Gastrocnemius medialis (tissue), 4 donors: ENCODE measurements at regions of chr10 and their contacts with region 1.

Region 1: DNA sequence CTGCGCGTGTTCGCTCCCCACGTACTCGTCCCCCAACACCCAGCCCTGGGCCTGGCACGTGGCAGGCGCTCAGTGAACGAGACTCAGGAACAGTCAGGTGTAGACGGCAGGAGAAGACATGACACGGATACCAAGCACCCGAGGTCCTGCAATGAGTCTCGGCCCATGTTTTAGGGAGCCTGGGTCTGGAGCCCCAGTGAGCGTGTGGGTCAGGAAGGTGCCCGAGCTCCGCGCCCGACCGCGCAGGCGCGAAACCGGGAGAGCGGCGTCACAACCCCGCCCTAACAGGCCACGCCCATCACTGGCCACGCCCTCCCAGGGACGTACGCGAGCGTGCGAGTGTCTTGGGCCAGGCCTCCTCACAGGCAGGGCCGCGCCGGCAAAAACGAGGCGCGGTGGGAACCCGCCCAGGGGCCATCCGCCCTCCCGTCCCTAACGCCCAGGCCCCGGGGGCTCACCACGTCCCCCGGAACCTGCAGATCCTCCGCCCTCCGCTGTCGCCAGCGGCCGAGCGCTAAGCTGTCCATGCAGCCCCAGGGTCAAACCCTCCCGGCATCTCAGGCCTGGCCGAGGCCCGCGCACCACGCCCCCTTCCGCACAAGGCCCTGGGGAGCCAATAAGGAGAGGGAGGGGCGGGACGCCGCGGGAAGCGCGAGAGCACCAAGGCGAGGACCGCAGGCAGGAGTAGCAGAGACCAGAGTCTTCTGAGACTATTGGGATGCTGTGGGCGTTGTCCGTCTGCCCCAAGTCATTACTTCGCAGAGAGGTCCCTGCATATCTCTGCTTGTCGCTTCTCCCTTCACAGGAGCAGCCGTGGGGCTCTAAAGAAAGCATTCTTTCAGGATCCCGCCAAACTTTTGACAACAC is at the start of gene C10orf143:
- DNase-seq: peak; percentile 96 to 97
- ATAC-seq: peak; percentile 89 to 90
- H3K4me3 ChIP-seq: peak within 1 kb of the TSS; percentile 80 to 96 (median 90)
- H3K27ac ChIP-seq: peak within 1 kb of the TSS; percentile 92 to 99 (median 96)
- H3K4me1 ChIP-seq: peaks cover 16 to 26% of the 10 kb centered on the region in 2 donors
- H3K27me3 ChIP-seq: no peaks in the 10 kb centered on the region
- CTCF ChIP-seq: no peak
- POLR2A ChIP-seq: peak; percentile 80 to 81
- total RNA-seq, gene C10orf143: 0.55 to 2.5 (median 1.3) TPM

Region 2: GRCh38 chr10:129466703-129467358 is 643.6 kb before region 1 on chr10 and contains the start of gene MGMT:
- in situ Hi-C with region 1: no loop called
- intact Hi-C with region 1: loop called (anchors 5 kb)
- DNase-seq: peak; percentile 84 to 92
- ATAC-seq: peak; percentile 95
- H3K4me3 ChIP-seq: peak within 1 kb of the TSS; percentile 74 to 97 (median 78)
- H3K27ac ChIP-seq: peak within 1 kb of the TSS; percentile 77 to 92 (median 84)
- H3K4me1 ChIP-seq: peaks cover 12 to 19% of the 10 kb centered on the region in 2 donors
- H3K27me3 ChIP-seq: no peaks in the 10 kb centered on the region
- CTCF ChIP-seq: peak in 1 of 5 experiments; percentile 7
- POLR2A ChIP-seq: peak; percentile 43 to 57
- total RNA-seq, gene MGMT: 8.9 to 20.7 (median 17.1) TPM

Region 3: DNA sequence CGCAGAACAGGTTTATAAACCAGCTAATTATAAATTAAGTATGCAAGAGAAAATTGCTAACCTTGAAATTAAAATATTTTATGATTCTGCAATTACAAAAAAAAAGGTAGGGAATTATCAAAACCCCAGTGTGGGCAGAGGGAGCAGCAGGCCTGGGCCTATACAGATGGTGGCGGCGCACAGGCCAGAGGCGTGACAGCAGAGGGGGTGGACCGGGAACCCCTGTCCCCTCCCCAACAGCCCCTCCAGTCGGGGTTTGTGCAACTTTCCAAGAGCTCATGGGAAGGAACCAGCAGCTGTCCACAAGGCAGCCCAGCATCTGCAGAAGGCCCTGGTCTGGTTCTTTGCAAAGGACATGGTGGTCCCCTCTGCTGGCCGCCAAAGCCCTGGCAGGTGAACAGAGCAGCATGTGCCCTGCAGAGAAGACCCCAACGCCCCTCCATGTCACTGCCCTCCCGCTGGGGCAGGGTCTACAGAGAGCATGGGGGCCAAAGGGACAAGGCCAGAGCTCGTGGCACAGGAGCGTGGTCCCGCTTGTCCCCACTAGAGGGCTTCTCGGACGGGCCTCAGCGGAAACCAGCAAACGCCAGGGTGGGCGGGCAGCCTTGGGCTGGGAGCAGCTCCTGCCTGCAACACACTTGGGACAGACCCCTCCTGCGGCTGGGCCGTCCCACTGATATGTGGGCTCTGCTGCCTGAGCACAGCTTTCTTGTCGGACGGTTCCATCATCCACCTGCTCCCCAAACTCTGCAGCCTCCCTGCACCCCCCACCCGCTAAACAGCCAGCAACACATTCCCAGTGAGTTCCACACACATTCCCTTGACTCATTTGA is 221.5 kb before region 1 on chr10:
- in situ Hi-C with region 1: no loop called
- intact Hi-C with region 1: loop called (anchors 10 kb)
- DNase-seq: peak in 1 of 2 donors; percentile 25
- ATAC-seq: peak; percentile 30 to 34
- H3K4me3 ChIP-seq: no peak overlapping the region
- H3K27ac ChIP-seq: peak overlapping the region in 3 of 4 donors; percentile 5 to 12 (median 8)
- H3K4me1 ChIP-seq: peaks cover 17 to 21% of the 10 kb centered on the region in 2 donors
- H3K27me3 ChIP-seq: no peaks in the 10 kb centered on the region
- CTCF ChIP-seq: peak; percentile 33 to 65 (median 56)
- POLR2A ChIP-seq: no peak

Region 4: GRCh38 chr10:129971381-129972144 is 138.9 kb before region 1 on chr10:
- in situ Hi-C with region 1: no loop called
- intact Hi-C with region 1: loop called (anchors 5 kb)
- DNase-seq: no peak
- ATAC-seq: peak; percentile 60 to 71
- H3K4me3 ChIP-seq: peak overlapping the region; percentile 40 to 60 (median 48)
- H3K27ac ChIP-seq: no peak overlapping the region
- H3K4me1 ChIP-seq: peaks cover 9 to 20% of the 10 kb centered on the region in 2 donors
- H3K27me3 ChIP-seq: peaks cover 59 to 64% (median 62%) of the 10 kb centered on the region in 3 donors
- CTCF ChIP-seq: peak in 4 of 5 experiments; percentile 51 to 84 (median 56)
- POLR2A ChIP-seq: no peak

Region 5: GRCh38 chr10:129993621-129994020 is 116.9 kb before region 1 on chr10:
- in situ Hi-C with region 1: no loop called
- intact Hi-C with region 1: no loop called
- DNase-seq: no peak
- ATAC-seq: peak; percentile 33 to 65
- H3K4me3 ChIP-seq: no peak overlapping the region
- H3K27ac ChIP-seq: no peak overlapping the region
- H3K4me1 ChIP-seq: no peaks in the 10 kb centered on the region
- H3K27me3 ChIP-seq: no peaks in the 10 kb centered on the region
- CTCF ChIP-seq: no peak
- POLR2A ChIP-seq: no peak

Region 6: DNA sequence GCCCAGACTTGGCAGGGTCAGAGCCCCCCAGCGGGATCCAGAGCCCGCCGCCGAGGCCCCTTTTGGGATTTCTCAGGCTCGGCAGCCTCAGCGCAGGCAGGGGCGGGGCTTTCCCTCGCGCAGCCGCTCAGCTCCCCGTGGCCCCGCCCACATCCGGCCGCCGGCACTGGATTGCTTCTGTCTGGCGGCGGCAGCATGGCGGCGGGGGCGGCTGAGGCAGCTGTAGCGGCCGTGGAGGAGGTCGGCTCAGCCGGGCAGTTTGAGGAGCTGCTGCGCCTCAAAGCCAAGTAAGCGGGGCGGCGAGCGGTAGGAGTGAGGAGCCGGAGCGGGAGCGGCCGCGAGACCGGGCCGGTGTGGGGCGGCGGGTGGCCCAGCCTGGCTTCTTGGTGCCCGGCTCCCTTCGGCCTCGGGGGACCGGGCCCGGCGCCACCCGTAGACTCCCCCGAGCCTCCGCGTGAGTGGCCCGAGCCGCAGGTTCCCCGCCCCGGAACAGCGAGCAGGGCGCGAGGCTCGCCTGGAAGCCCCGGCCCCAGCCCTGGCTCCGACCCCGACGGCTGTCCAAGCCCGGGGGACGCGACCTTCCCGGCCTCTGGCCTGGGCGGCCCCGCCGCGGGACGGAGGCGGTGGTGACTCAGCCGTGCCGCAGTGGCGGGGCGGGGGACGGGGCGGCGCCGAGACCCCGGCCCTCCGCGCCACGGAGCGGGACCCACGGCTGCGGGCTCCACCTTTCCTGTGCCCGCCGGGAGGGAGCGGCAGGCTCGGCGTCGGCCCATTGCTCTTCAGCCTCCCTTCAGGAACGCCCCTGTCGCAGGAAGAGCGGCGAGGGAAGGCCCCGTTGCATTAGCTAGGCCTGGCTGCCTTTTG is 26.0 kb after region 1 on chr10 and contains the start of gene GLRX3:
- in situ Hi-C with region 1: no loop called
- intact Hi-C with region 1: loop called (anchors 1 kb)
- DNase-seq: peak; percentile 76 to 80
- ATAC-seq: peak; percentile 89 to 92
- H3K4me3 ChIP-seq: peak within 1 kb of the TSS; percentile 79 to 100 (median 96)
- H3K27ac ChIP-seq: peak within 1 kb of the TSS; percentile 82 to 97 (median 96)
- H3K4me1 ChIP-seq: peaks cover 35 to 45% of the 10 kb centered on the region in 2 donors
- H3K27me3 ChIP-seq: no peaks in the 10 kb centered on the region
- CTCF ChIP-seq: no peak
- POLR2A ChIP-seq: peak; percentile 86
- total RNA-seq, gene GLRX3: 41.0 to 68.0 (median 50.1) TPM